AG04449 (cell line): ENCODE measurements at regions of chr16 and their contacts with region 1.

Region 1: DNA sequence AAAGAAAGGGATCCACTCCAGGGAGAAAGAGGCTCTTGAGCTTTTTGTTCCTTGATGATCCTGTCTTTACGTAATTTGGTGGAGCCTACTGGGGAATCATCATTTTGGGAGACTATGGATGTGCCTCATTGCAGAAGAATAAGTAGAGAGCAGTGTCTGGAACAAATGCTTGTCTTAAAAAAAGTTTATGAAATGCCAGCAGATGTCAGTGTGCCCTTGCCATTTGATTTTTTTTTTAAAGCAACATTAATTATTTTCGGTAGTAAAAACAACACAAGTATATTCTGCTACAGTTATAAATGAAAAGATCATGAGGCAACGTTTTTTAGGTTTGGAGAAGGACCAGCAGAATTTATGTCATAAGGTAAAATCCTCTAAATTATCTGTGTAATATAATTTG is 934.8 kb upstream of the EEF2KMT start:
- DNase-seq: no peak
- H3K4me3 ChIP-seq: no peak overlapping the region
- CTCF ChIP-seq: no peak

Region 2: DNA sequence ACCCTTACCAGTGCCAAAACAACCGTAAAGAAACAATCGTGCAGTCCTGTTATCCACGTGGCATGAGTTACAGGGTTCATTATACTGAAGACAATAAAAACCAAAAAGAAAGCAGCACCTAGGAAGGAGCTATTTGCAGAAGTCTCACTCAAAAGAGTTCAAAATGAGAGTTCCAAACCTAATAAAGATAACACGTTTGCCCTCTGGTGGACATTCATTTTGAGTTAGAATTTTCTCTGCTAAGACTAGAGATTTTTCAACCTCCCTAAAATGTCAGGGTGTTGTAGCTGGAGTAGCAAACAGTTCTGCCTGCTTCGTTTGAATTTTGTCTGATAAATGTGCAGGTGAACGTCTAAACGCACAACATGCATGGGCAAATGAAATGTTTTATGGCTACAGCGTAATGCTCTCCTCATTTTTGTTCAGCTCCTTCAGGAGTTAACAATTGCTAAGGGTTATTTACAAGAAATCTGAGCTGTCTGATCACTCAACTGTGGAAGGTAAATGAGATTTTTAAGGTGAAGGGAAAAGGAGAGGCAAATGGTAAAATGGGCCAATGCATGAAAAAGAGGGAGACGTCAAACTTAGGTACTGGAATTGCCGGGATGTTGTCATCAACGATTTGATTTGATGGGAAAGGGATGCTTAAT is 133.0 kb after region 1 on chr16:
- CTCF ChIA-PET with region 1: interaction called, 11 read pairs
- POLR2A ChIA-PET with region 1: no interaction called
- DNase-seq: no peak
- H3K4me3 ChIP-seq: no peak overlapping the region
- CTCF ChIP-seq: no peak

Region 3: DNA sequence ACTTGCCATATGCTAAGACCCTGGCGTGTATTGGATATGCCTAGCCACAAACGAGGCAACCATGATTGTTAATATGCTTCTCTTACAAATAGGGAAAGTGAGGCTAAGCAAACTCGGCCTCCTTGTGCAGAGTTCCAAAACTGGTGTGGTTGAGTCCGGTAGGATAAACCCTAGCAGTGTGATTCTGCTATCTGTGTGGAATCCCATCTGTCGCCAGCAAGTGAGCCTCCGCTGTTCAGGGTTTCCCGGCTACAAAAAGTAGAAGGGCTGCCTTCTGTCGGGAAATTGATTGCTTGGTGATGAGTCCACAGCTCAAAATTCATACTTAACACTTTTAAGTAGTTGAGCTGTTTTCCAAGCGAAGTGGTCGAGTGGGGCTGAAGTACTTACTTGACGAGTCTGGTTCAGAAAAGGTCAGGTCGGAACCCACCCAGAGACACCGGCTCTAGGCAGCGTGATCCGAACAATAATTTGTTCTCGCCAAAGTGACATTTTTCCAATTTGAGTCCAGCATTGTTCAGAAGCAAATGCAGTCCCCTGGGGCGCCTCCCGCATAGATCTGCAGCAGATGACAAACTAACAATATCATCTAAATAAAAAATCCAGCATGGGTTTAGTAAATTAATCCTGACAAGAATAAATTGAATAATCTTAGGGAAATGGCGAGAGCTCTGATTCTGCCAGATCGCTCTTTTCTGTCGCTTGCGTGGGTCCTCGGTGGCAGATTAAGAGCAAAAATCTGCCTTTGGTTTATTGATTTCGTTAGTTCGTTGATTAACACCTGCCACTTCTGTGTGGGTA is 613.5 kb after region 1 on chr16:
- CTCF ChIA-PET with region 1: no interaction called
- POLR2A ChIA-PET with region 1: no interaction called
- DNase-seq: no peak
- H3K4me3 ChIP-seq: no peak overlapping the region
- CTCF ChIP-seq: no peak